AG04449 (cell line): ENCODE measurements at regions of chr2 and their contacts with region 1.

Region 1: GRCh38 chr2:31170071-31170698 is 31.9 kb upstream of the GALNT14 start:
- DNase-seq: peak; percentile 5
- H3K4me3 ChIP-seq: no peak overlapping the region
- CTCF ChIP-seq: peak; percentile 94

Region 2: DNA sequence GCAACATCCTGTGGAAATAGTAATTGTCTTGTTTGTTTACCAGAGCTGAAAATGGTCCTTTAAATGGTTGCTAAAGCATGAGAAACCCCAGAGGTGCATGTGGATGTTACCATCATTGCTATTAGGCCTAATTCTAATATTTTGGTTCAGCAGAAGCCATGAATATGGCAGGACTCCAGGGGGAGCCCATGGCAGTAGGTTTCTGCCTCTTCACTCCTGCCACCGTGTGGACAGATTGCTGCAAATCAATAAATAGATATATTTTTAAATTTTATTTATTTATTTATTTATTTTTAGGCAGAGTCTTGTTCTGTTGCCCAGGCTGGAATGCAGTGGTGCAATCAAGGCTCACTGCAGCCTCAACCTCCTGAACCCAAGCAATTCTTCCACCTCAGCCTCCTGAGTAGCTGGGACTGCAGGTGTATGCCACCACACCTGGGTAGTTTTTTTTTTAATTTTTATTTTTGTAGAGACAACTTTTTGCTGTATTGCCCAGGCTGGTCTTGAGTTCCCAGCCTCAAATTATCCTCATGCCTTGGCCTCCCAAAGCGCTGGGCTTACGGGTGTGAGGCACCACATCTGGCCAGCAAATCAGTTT is 308.0 kb before region 1 on chr2:
- CTCF ChIA-PET with region 1: interaction called, 24 read pairs
- POLR2A ChIA-PET with region 1: no interaction called
- DNase-seq: peak; percentile 17
- H3K4me3 ChIP-seq: no peak overlapping the region
- CTCF ChIP-seq: peak; percentile 68

Region 3: GRCh38 chr2:31151501-31151900 is 18.7 kb before region 1 on chr2:
- CTCF ChIA-PET with region 1: interaction called, 10 read pairs
- POLR2A ChIA-PET with region 1: no interaction called
- DNase-seq: no peak
- H3K4me3 ChIP-seq: no peak overlapping the region
- CTCF ChIP-seq: no peak

Region 4: GRCh38 chr2:31196622-31197021 is 26.4 kb after region 1 on chr2:
- CTCF ChIA-PET with region 1: interaction called, 12 read pairs
- POLR2A ChIA-PET with region 1: no interaction called
- DNase-seq: no peak
- H3K4me3 ChIP-seq: no peak overlapping the region
- CTCF ChIP-seq: no peak